CD4-positive, alpha-beta memory T cell (primary cell): ENCODE measurements at regions of chr1 and their contacts with region 1.

Region 1: GRCh38 chr1:241756582-241756981 is 91.4 kb upstream of the EXO1 start:
- DNase-seq: no peak
- H3K4me3 ChIP-seq: no peak overlapping the region
- H3K4me3 Mint-ChIP-seq: no peak overlapping the region
- H3K27ac ChIP-seq: no peak overlapping the region
- H3K27ac Mint-ChIP-seq: no peak overlapping the region
- H3K4me1 ChIP-seq: no peaks in the 10 kb centered on the region
- H3K4me1 Mint-ChIP-seq: no peaks in the 10 kb centered on the region
- H3K27me3 ChIP-seq: no peaks in the 10 kb centered on the region
- H3K27me3 Mint-ChIP-seq: peaks cover 0 to 1% of the 10 kb centered on the region in 2 donors

Region 2: GRCh38 chr1:241654019-241654418 is 102.6 kb before region 1 on chr1:
- CTCF ChIA-PET with region 1: no interaction called
- POLR2A ChIA-PET with region 1: no interaction called
- intact Hi-C with region 1: loop called (anchors 5 kb)
- DNase-seq: no peak
- H3K4me3 ChIP-seq: no peak overlapping the region
- H3K4me3 Mint-ChIP-seq: no peak overlapping the region
- H3K27ac ChIP-seq: no peak overlapping the region
- H3K27ac Mint-ChIP-seq: no peak overlapping the region
- H3K4me1 ChIP-seq: no peaks in the 10 kb centered on the region
- H3K4me1 Mint-ChIP-seq: no peaks in the 10 kb centered on the region
- H3K27me3 ChIP-seq: no peaks in the 10 kb centered on the region
- H3K27me3 Mint-ChIP-seq: peaks cover 4 to 12% of the 10 kb centered on the region in 2 donors